PC-9 (cell line): ENCODE measurements at regions of chr1 and their contacts with region 1.

Region 1: DNA sequence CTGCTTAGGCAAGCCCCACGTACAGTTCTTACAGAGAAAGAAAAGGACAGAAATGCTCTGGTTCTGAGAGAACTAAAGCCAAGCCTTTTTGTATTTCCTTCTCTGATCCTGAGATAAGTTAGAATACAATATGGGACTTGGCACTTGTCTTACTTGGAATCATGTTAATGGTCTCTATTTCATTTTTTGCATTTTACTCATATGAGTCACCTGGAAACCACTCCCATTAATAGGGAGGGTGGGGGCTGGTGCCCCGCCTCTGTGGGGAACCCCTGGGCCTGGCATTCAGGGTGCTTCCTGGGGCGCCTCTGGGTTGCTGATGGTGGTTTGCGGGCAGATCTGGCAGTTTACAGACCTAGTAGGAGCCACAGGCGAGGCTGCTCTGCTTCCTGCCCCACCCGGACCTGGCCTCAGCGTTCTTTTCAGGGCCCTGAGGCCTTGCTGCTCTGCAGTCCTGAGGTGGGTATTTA is 26.7 kb downstream of the TSPAN2 start:
- DNase-seq: peak; percentile 98 to 99
- H3K4me3 ChIP-seq: peak overlapping the region; percentile 49
- H3K27ac ChIP-seq: peak overlapping the region; percentile 96
- H3K4me1 ChIP-seq: peaks cover 54% of the 10 kb centered on the region
- H3K27me3 ChIP-seq: no peaks in the 10 kb centered on the region
- CTCF ChIP-seq: 0 out of 2 replicates have a peak, but pooled peaks have one; percentile 26

Region 2: DNA sequence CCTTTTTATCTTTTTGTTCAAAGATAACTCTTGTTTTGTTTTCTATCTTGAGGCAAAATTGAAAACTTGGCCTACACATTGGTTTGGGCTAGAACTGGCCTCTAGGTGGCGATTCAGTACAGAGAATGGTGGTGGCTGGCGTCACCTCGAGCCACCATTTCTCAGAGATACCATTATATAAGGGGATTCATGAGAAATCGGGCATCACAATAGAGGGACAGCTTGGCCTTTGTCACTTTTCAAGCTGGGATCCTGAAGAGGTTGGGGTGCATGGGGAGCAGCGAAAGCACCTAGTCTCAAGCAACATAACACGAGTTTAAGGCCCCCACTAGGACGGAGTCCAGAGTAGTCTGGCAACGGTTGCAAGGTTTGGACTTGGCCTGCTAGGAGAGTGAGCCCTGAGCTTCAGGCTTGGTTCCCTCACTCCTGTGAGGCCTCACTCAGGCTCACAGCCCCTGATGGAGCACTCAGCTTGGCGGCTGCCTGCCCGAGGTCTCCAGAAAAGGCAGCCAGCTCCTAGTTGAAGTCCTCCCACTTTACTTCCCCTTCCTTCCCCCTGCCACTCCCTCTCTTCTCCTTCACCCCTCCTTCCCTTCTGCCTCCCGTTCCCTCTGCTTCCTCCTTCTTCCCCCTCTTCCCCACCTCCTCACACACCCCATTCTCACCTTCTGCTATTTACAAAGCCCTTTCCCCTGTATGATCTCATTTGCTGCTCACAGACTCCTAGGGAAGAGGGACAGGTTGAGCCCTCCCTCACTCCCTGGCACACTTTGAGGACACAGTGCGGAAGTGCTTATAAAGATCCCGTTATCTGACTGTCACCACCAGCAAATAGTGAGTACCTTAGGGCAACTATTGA is 1921.8 kb before region 1 on chr1:
- CTCF ChIA-PET with region 1: no interaction called
- POLR2A ChIA-PET with region 1: interaction called, 11 read pairs
- intact Hi-C with region 1: no loop called
- DNase-seq: peak; percentile 58 to 61
- H3K4me3 ChIP-seq: no peak overlapping the region
- H3K27ac ChIP-seq: peak overlapping the region; percentile 31; the same call in 1 of the 2 replicates
- H3K4me1 ChIP-seq: peaks cover 16% of the 10 kb centered on the region
- H3K27me3 ChIP-seq: no peaks in the 10 kb centered on the region
- CTCF ChIP-seq: peak; percentile 99

Region 3: DNA sequence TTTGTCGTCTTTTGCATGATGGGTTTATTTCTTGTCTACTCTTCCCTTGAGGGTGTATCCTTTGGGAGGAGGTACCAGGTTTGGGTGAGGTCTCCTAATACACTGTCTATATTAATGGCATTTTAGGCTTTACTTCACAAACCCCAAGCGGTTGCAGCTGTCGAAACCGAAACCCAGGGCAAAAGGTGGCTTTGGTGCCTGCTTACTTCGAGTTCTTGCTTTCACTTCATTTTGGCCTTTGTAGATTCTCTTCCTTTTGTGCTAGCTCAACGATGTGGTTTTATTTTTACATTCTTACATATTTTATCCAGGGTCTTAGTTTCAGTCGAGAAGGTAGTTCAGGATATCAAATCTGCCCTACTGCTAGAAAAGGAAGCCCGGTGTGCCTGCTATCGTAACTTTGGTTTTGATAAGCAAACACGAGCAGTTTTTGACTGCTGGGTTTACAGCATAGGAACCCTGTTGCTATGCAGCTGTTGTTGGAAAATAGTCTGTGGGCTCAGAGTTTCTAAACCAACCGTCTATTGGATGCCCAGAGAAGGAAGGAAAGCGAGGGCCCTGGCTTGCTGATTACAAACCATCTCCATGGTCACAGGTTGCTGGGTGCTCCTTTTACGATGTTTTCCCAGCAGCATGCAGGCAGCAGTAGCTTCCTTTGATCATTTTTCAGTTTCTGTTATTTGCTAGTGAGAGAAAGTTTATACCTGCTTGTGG is 36.6 kb after region 1 on chr1:
- CTCF ChIA-PET with region 1: no interaction called
- POLR2A ChIA-PET with region 1: no interaction called
- intact Hi-C with region 1: loop called (anchors 2 kb)
- DNase-seq: peak; percentile 61 to 95
- H3K4me3 ChIP-seq: peak overlapping the region; percentile 55
- H3K27ac ChIP-seq: peak overlapping the region; percentile 78
- H3K4me1 ChIP-seq: peaks cover 23% of the 10 kb centered on the region
- H3K27me3 ChIP-seq: no peaks in the 10 kb centered on the region
- CTCF ChIP-seq: no peak

Region 4: GRCh38 chr1:115112496-115113375 is 50.2 kb after region 1 on chr1:
- CTCF ChIA-PET with region 1: no interaction called
- POLR2A ChIA-PET with region 1: no interaction called
- intact Hi-C with region 1: loop called (anchors 2 kb)
- DNase-seq: peak in 1 of 2 experiments; percentile 56
- H3K4me3 ChIP-seq: no peak overlapping the region
- H3K27ac ChIP-seq: no peak overlapping the region
- H3K4me1 ChIP-seq: peaks cover 63% of the 10 kb centered on the region
- H3K27me3 ChIP-seq: no peaks in the 10 kb centered on the region
- CTCF ChIP-seq: peak; percentile 99

Region 5: DNA sequence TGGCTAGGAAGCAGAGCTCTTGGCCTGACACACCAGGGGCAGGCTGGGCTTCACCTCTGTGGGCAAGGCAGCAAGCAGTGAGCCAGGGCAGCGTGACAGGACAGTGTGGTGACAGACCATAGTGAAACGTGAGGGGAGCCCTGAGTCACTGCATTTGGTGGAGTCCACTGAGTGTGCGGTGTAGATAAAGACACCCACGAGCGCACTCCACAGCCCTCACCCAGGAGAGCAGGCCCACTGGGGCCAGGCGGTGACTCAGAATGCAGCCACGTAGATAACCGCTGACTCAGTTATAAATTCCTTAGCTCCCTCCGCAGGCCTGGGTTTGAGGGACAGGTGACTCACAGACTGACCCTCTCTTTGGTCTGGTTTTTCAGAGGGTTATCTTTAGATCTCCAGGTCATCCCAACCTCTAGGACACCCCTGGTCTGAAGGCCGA is 116.8 kb after region 1 on chr1:
- CTCF ChIA-PET with region 1: no interaction called
- POLR2A ChIA-PET with region 1: no interaction called
- intact Hi-C with region 1: loop called (anchors 5 kb)
- DNase-seq: peak; percentile 92 to 100
- H3K4me3 ChIP-seq: no peak overlapping the region
- H3K27ac ChIP-seq: peak overlapping the region; percentile 89
- H3K4me1 ChIP-seq: peaks cover 57% of the 10 kb centered on the region
- H3K27me3 ChIP-seq: no peaks in the 10 kb centered on the region
- CTCF ChIP-seq: no peak

Region 6: DNA sequence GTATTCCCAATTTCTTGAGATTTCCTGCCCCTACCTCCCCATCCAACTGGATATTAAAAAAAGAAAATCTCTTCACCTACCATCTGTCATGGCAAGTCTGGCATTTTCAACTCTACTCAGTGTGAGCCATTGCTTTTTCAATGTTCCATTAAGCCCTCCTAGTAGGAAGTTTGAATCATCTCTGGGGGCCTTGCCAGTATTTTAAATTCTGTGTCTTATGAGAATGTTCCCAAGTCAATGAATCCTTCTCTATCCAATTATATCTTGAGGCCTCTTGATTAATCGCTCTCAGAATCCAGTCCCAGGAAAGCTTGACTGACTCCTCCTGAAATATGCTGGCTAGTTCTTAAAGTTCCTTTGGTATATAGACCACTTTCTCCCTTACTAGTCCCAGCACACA is 183.9 kb after region 1 on chr1:
- CTCF ChIA-PET with region 1: no interaction called
- POLR2A ChIA-PET with region 1: no interaction called
- intact Hi-C with region 1: no loop called
- DNase-seq: no peak
- H3K4me3 ChIP-seq: no peak overlapping the region
- H3K27ac ChIP-seq: no peak overlapping the region
- H3K4me1 ChIP-seq: peaks cover 13% of the 10 kb centered on the region
- H3K27me3 ChIP-seq: no peaks in the 10 kb centered on the region
- CTCF ChIP-seq: no peak

Region 7: GRCh38 chr1:115463363-115463746 is 400.8 kb after region 1 on chr1:
- CTCF ChIA-PET with region 1: no interaction called
- POLR2A ChIA-PET with region 1: no interaction called
- intact Hi-C with region 1: loop called (anchors 1 kb)
- DNase-seq: peak in 1 of 2 experiments; percentile 56
- H3K4me3 ChIP-seq: no peak overlapping the region
- H3K27ac ChIP-seq: no peak overlapping the region
- H3K4me1 ChIP-seq: peaks cover 50% of the 10 kb centered on the region
- H3K27me3 ChIP-seq: no peaks in the 10 kb centered on the region
- CTCF ChIP-seq: peak; percentile 87

Region 8: GRCh38 chr1:115476616-115477015 is 414.0 kb after region 1 on chr1:
- CTCF ChIA-PET with region 1: no interaction called
- POLR2A ChIA-PET with region 1: no interaction called
- intact Hi-C with region 1: no loop called
- DNase-seq: no peak
- H3K4me3 ChIP-seq: no peak overlapping the region
- H3K27ac ChIP-seq: no peak overlapping the region
- H3K4me1 ChIP-seq: peaks cover 27% of the 10 kb centered on the region
- H3K27me3 ChIP-seq: no peaks in the 10 kb centered on the region
- CTCF ChIP-seq: no peak

Region 9: GRCh38 chr1:115545791-115546733 is 483.5 kb after region 1 on chr1:
- CTCF ChIA-PET with region 1: no interaction called
- POLR2A ChIA-PET with region 1: no interaction called
- intact Hi-C with region 1: loop called (anchors 1 kb)
- DNase-seq: peak; percentile 92 to 99
- H3K4me3 ChIP-seq: peak overlapping the region; percentile 9; the same call in 1 of the 2 replicates
- H3K27ac ChIP-seq: peak overlapping the region; percentile 91
- H3K4me1 ChIP-seq: peaks cover 35% of the 10 kb centered on the region
- H3K27me3 ChIP-seq: no peaks in the 10 kb centered on the region
- CTCF ChIP-seq: peak; percentile 82